ENCODE measurements at regions of chrX and their contacts with region 1.

Region 1: GRCh38 chrX:20527558-20528011 is 260.9 kb upstream of the RPS6KA3 start:
- DNase-seq: no peak
- H3K4me3 Mint-ChIP-seq: no peak overlapping the region
- H3K27ac Mint-ChIP-seq: no peak overlapping the region
- H3K4me1 Mint-ChIP-seq: peaks cover 22% of the 10 kb centered on the region
- H3K27me3 Mint-ChIP-seq: peaks cover 25% of the 10 kb centered on the region

Region 2: DNA sequence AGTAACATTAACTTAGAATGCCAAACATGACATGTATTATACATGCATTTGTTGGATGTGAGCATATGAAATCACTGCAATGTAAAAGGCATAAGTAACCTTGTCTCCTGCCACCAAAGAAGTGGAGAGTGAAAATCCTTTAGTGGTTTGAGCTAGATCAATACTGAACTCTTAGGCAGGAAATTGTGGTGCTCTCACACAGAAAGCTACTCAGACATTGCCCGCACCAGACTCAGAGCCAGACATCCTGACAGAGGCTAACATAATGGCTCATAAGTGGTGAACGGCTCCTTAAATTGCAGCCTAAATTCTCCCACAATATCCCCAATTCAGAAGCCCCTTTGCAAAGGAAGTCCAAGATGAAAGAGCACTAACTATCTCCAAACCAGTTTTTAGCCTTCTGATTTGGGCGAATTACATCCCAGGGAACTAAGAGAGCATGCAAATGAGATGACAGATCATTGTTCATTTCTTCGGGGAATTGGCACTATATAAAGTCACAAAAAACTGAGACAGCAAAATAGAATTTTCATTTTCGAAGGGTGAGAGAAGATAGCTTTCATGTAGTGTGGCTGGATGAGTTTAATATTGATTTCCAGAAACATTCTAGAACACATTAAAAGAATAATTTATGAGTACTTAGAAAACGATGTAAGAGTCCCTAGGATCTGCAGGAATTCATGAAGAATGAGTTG is 27.3 kb before region 1 on chrX:
- intact Hi-C with region 1: no loop called
- DNase-seq: peak; percentile 73
- H3K4me3 Mint-ChIP-seq: peak overlapping the region; percentile 48
- H3K27ac Mint-ChIP-seq: no peak overlapping the region
- H3K4me1 Mint-ChIP-seq: peaks cover 15% of the 10 kb centered on the region
- H3K27me3 Mint-ChIP-seq: peaks cover 43% of the 10 kb centered on the region

Region 3: GRCh38 chrX:20511792-20512191 is 15.8 kb before region 1 on chrX:
- intact Hi-C with region 1: no loop called
- DNase-seq: no peak
- H3K4me3 Mint-ChIP-seq: no peak overlapping the region
- H3K27ac Mint-ChIP-seq: no peak overlapping the region
- H3K4me1 Mint-ChIP-seq: peaks cover 27% of the 10 kb centered on the region
- H3K27me3 Mint-ChIP-seq: peaks cover 17% of the 10 kb centered on the region

Region 4: GRCh38 chrX:20718592-20719389 is 191.2 kb after region 1 on chrX:
- intact Hi-C with region 1: no loop called
- DNase-seq: no peak
- H3K4me3 Mint-ChIP-seq: no peak overlapping the region
- H3K27ac Mint-ChIP-seq: no peak overlapping the region
- H3K4me1 Mint-ChIP-seq: no peaks in the 10 kb centered on the region
- H3K27me3 Mint-ChIP-seq: no peaks in the 10 kb centered on the region

Region 5: GRCh38 chrX:21479695-21480270 is 952.2 kb after region 1 on chrX:
- intact Hi-C with region 1: loop called (anchors 2 kb)
- DNase-seq: peak; percentile 67
- H3K4me3 Mint-ChIP-seq: no peak overlapping the region
- H3K27ac Mint-ChIP-seq: no peak overlapping the region
- H3K4me1 Mint-ChIP-seq: no peaks in the 10 kb centered on the region
- H3K27me3 Mint-ChIP-seq: no peaks in the 10 kb centered on the region

Region 6: GRCh38 chrX:21745756-21746155 is 1218.2 kb after region 1 on chrX:
- intact Hi-C with region 1: loop called (anchors 2 kb)
- DNase-seq: peak; percentile 74
- H3K4me3 Mint-ChIP-seq: no peak overlapping the region
- H3K27ac Mint-ChIP-seq: no peak overlapping the region
- H3K4me1 Mint-ChIP-seq: no peaks in the 10 kb centered on the region
- H3K27me3 Mint-ChIP-seq: peaks cover 20% of the 10 kb centered on the region

Region 7: DNA sequence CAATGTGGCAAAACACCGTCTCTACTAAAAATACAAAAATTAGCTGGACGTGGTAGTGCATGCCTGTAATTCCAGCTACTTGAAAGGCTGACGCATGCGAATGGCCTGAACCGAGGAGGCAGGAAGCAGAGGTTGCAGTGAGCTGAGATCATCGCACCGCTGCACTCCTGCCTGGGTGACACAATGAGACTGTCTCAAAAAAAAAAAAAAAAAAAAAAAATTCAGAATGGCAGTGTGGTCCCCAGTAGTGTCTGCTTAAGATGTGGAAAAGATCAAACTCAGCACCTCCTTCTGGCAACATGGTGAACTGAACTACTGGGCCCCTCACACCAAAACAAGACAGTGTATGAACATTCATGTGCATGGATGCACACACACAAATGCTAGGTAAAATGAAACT is 1445.1 kb after region 1 on chrX:
- intact Hi-C with region 1: loop called (anchors 10 kb)
- DNase-seq: peak; percentile 81
- H3K4me3 Mint-ChIP-seq: peak overlapping the region; percentile 25
- H3K27ac Mint-ChIP-seq: peak overlapping the region; percentile 85
- H3K4me1 Mint-ChIP-seq: peaks cover 34% of the 10 kb centered on the region
- H3K27me3 Mint-ChIP-seq: no peaks in the 10 kb centered on the region

Measured in activated CD4-positive, alpha-beta T cell treated with anti-CD3 and anti-CD28 coated beads, Interleukin-2, amount 10 ng/mL, durations not matched to agents 24 days and 14 days (primary cell).